Thyroid gland (tissue), 4 donors: ENCODE measurements at regions of chr21 and their contacts with region 1.

Region 1: GRCh38 chr21:15645830-15646229 is 84.0 kb upstream of the USP25 start:
- DNase-seq: no peak
- H3K4me3 ChIP-seq: no peak overlapping the region
- H3K27ac ChIP-seq: no peak overlapping the region
- H3K4me1 ChIP-seq: peaks cover 0 to 5% of the 10 kb centered on the region in 2 donors
- H3K27me3 ChIP-seq: no peaks in the 10 kb centered on the region
- CTCF ChIP-seq: no peak
- POLR2A ChIP-seq: no peak

Region 2: DNA sequence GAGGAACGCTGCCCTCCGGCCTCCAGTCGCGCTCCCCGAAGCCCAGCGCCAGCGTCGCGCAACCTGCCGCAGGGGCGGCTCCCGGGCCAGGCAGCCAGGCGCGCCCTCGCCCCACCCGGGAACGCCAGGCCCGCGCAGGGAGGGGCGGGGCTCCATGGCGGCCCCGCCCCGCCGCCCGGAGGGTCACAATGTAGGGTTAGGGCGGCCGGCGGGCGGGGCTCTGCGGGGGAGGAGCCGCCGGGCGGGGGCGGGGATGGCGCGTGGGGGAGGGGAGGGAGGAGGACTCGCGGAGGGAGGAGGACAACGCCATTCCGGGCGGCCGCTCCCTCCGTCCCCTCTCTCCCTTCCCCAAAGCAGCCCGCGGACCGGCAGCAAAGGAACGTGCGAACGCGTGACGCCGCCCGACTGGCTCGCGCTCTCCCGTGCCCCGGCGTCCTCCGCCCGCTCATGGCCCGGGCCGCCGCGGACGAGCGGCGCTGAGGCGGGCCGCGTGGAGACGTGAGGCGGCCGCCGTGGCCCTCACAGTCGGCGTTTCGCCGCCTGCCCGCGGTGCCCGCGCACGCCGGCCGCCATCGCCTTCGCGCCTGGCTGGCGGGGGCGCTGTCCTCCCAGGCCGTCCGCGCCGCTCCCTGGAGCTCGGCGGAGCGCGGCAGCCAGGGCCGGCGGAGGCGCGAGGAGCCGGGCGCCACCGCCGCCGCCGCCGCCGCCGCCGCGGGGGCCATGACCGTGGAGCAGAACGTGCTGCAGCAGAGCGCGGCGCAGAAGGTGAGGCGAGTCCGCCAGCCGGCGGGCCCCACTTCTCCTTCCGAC is 84.0 kb after region 1 on chr21 and contains the start of gene USP25:
- intact Hi-C with region 1: loop called (anchors 10 kb)
- DNase-seq: peak; percentile 88 to 90
- H3K4me3 ChIP-seq: peak within 1 kb of the TSS; percentile 21 to 65 (median 65)
- H3K27ac ChIP-seq: peak within 1 kb of the TSS; percentile 82 to 96 (median 95)
- H3K4me1 ChIP-seq: peaks cover 5 to 23% of the 10 kb centered on the region in 2 donors
- H3K27me3 ChIP-seq: no peaks in the 10 kb centered on the region
- CTCF ChIP-seq: peak in 3 of 6 experiments; percentile 19 to 42 (median 30)
- POLR2A ChIP-seq: peak; percentile 78 to 92
- total RNA-seq, gene USP25: 42.4 to 67.4 (median 49.8) TPM